Head of caudate nucleus (tissue), 42 donors: ENCODE measurements at regions of chr12 and their contacts with region 1.

Region 1: DNA sequence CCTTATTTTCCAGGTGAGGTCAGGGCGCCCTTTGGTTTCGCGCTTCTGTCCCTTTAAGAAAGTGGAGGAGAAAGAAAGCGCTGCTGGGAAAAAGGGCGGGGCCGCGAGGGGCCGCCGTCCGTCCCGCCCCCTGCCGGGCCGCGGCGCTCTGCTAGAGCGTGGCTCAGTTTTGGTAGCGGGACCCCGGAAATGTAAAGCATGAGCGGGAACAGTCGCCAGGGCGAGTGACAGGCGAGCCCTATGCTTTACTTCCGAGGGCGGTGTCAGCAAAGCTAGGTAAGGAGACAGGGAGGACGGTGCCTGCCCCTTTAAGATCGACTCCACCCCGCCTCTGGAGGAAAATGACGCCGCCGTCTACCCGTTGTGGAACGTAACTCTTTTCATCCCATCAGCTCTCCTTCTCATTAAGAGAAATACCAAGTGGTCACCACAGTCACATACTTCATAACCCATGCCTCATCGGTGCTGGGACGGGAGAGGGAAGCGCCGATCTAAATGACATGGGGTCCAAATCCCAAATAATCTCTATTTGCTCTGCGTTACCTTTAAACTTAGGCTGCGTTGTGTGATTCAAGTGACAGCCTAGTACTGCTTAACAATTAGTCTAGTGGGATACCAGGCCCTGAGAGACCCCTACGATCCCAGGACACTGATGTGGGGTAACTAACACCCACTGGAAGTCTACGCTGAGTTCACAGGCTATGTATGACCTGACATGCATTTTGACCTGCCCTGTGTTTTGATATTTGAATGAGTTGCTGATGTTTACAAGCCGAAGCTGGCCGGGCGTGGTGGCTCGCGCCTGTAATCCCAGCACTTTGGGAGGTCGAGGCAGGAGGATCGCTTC is at the start of gene ETFBKMT:
- DNase-seq: peak; percentile 77 to 97 (median 90)

Region 2: GRCh38 chr12:31362759-31363415 is 296.4 kb before region 1 on chr12:
- intact Hi-C with region 1: no loop called
- DNase-seq: peak in 12 of 42 donors; percentile 9 to 42 (median 20)

Region 3: DNA sequence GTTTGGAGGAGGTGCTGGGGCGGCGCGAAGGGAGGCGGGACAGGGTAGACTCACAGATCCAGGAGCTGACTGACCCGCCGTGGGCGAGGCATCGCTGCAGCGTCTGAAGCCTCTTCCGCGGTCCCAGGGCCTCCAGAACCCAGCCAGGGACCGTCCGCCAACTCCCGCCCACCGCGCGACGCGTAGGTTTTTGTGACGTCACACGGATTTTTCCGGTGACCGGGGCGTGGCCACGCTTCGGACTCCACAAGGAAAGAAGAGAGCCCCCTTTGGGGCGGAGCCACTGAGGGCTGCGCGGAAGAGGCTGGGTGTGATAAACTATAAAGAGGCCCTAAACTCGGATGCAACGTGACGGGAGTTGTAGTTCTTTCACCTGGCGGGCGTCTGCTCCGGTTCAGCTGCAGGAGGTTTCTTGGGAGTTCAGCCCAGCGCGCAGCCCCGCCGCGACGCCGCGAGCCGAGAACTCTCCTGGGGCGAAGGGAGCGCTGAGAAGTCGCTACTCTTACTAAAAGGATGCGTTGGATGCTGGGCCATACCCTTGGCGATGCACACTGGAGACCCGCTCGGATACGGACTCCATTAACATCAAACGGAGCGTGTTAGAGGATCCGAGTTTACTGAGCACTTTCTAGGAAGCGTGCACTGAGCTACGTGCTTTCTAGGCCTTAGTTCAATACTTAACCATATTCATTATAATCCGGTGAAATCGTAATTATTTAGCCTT is 69.8 kb after region 1 on chr12 and contains the start of gene AMN1:
- intact Hi-C with region 1: loop called (anchors 2 kb)
- DNase-seq: peak; percentile 96 to 99 (median 98)

Region 4: GRCh38 chr12:32302218-32303173 is 643.2 kb after region 1 on chr12:
- intact Hi-C with region 1: loop called (anchors 10 kb)
- DNase-seq: peak in 6 of 42 donors; percentile 4 to 47 (median 20)

Region 5: GRCh38 chr12:32679091-32679919 is 1020.0 kb after region 1 on chr12 and contains the start of gene DNM1L:
- intact Hi-C with region 1: loop called (anchors 10 kb)
- DNase-seq: peak; percentile 86 to 98 (median 97)